ENCODE measurements at regions of chr1 and their contacts with region 1.

Region 1: GRCh38 chr1:20702416-20702815 is 15.4 kb downstream of the KIF17 start:
- DNase-seq: no peak
- ATAC-seq: peak; percentile 58; the same call in 1 of the 2 replicates
- H3K4me3 ChIP-seq: no peak overlapping the region
- H3K27ac ChIP-seq: no peak overlapping the region
- H3K4me1 ChIP-seq: no peaks in the 10 kb centered on the region
- H3K27me3 ChIP-seq: no peaks in the 10 kb centered on the region
- CTCF ChIP-seq: peak; percentile 60; the same call in 1 of the 2 replicates

Region 2: DNA sequence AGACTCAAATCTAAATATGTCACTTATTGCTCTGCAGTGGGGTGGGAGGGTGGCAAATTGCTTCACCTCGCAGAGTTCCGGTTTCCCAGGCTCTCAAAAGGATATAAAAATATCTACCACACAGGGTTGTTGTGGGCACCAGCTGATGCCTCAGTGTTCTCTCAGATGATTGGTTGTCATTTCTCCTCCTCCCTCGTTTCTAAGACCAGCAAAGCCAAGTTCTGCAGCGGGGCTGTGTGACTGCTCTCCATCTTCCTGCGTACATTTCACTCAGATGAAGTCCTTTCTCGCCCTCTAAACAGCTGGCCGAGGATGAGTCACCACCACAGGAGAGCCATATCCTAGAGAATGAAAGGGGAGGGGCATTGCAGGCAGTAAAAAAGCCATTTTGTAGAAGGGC is 446.8 kb before region 1 on chr1:
- CTCF ChIA-PET with region 1: no interaction called
- POLR2A ChIA-PET with region 1: no interaction called
- in situ Hi-C with region 1: no loop called
- intact Hi-C with region 1: no loop called
- DNase-seq: no peak
- ATAC-seq: peak; percentile 39
- H3K4me3 ChIP-seq: no peak overlapping the region
- H3K27ac ChIP-seq: no peak overlapping the region
- H3K4me1 ChIP-seq: peaks cover 1% of the 10 kb centered on the region; the same call in 1 of the 2 replicates
- H3K27me3 ChIP-seq: no peaks in the 10 kb centered on the region; the same call in 1 of the 2 replicates
- CTCF ChIP-seq: no peak

Region 3: GRCh38 chr1:20682571-20683236 is 19.7 kb before region 1 on chr1:
- CTCF ChIA-PET with region 1: no interaction called
- POLR2A ChIA-PET with region 1: no interaction called
- in situ Hi-C with region 1: no loop called
- intact Hi-C with region 1: no loop called
- DNase-seq: no peak
- ATAC-seq: no peak
- H3K4me3 ChIP-seq: no peak overlapping the region
- H3K27ac ChIP-seq: no peak overlapping the region
- H3K4me1 ChIP-seq: no peaks in the 10 kb centered on the region
- H3K27me3 ChIP-seq: no peaks in the 10 kb centered on the region
- CTCF ChIP-seq: no peak

Region 4: GRCh38 chr1:20717452-20718342 is 15.3 kb after region 1 on chr1 and contains the start of gene KIF17:
- CTCF ChIA-PET with region 1: interaction called, 7 read pairs
- POLR2A ChIA-PET with region 1: interaction called, 14 read pairs
- in situ Hi-C with region 1: no loop called
- intact Hi-C with region 1: no loop called
- DNase-seq: no peak
- ATAC-seq: peak; percentile 93
- H3K4me3 ChIP-seq: peak within 1 kb of the TSS; percentile 41 to 60
- H3K27ac ChIP-seq: peak within 1 kb of the TSS; percentile 57; the same call in 1 of the 2 replicates
- H3K4me1 ChIP-seq: peaks cover 3% of the 10 kb centered on the region; the same call in 1 of the 2 replicates
- H3K27me3 ChIP-seq: no peaks in the 10 kb centered on the region
- CTCF ChIP-seq: no peak
- total RNA-seq, gene KIF17: 3.9 TPM

Region 5: DNA sequence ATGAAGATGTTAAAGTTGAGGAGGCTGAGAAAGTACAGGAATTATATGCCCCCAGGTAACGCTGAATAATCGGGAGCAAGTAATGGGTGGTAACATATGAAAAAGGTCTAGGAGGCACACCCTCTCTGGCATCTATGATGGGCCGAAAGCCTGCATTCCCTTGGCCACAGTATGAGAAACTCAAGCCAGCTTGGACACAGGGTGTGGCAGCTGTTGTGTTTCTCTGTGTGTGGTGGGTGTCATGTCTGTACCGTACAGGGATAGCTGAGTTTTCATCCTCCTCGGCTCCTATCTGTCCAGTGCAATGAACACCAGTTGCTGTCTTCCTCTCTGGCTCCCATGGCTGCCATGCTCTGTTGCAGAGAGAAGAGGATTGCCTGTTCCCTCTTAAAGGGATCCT is 770.4 kb after region 1 on chr1:
- CTCF ChIA-PET with region 1: no interaction called
- POLR2A ChIA-PET with region 1: no interaction called
- in situ Hi-C with region 1: no loop called
- intact Hi-C with region 1: no loop called
- DNase-seq: no peak
- ATAC-seq: no peak
- H3K4me3 ChIP-seq: no peak overlapping the region
- H3K27ac ChIP-seq: no peak overlapping the region
- H3K4me1 ChIP-seq: no peaks in the 10 kb centered on the region
- H3K27me3 ChIP-seq: no peaks in the 10 kb centered on the region
- CTCF ChIP-seq: no peak

Measured in Panc1 (cell line).